ENCODE measurements at regions of chr22 and their contacts with region 1.

Region 1: GRCh38 chr22:22959147-22959827 is 71.7 kb downstream of the IGLL5 start:
- DNase-seq: peak; percentile 88
- H3K4me3 Mint-ChIP-seq: no peak overlapping the region
- H3K27ac Mint-ChIP-seq: no peak overlapping the region
- H3K4me1 Mint-ChIP-seq: peaks cover 2% of the 10 kb centered on the region
- H3K27me3 Mint-ChIP-seq: peaks cover 15% of the 10 kb centered on the region

Region 2: GRCh38 chr22:22810018-22810427 is 149.3 kb before region 1 on chr22:
- CTCF ChIA-PET with region 1: interaction called, 77 read pairs
- intact Hi-C with region 1: loop called (anchors 1 kb)
- DNase-seq: peak; percentile 80
- H3K4me3 Mint-ChIP-seq: no peak overlapping the region
- H3K27ac Mint-ChIP-seq: no peak overlapping the region
- H3K4me1 Mint-ChIP-seq: peaks cover 12% of the 10 kb centered on the region
- H3K27me3 Mint-ChIP-seq: no peaks in the 10 kb centered on the region

Region 3: GRCh38 chr22:22942511-22943329 is 16.6 kb before region 1 on chr22:
- CTCF ChIA-PET with region 1: interaction called, 45 read pairs
- intact Hi-C with region 1: no loop called
- DNase-seq: peak; percentile 89
- H3K4me3 Mint-ChIP-seq: no peak overlapping the region
- H3K27ac Mint-ChIP-seq: no peak overlapping the region
- H3K4me1 Mint-ChIP-seq: peaks cover 1% of the 10 kb centered on the region
- H3K27me3 Mint-ChIP-seq: peaks cover 2% of the 10 kb centered on the region

Region 4: DNA sequence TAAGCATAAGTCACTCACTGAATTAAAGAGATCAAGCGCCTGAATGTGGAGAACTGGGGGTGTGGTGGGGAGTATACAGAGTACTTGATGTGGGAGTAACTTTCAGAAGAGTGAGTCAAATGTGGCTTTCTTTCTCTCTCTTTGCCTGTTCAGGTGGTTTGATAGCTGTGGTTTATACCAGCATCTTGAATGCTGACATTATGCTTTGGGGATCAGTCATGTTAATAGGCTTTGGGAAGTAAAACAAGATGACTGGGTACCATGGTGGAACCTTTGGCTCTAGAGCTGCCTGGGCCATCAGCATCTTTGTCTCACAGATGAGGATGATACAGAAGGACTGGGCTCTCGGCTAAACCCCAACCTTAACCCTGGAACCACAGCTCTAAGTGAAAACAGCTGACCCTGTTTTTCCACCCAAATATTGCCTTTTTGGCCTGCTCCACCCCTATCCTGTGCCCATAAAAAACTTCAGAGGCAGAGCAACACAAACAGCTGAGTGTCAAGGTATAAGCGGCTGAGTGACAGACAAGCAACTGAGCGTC is 52.9 kb after region 1 on chr22:
- CTCF ChIA-PET with region 1: interaction called, 10 read pairs
- intact Hi-C with region 1: no loop called
- DNase-seq: peak; percentile 69
- H3K4me3 Mint-ChIP-seq: no peak overlapping the region
- H3K27ac Mint-ChIP-seq: peak overlapping the region; percentile 48
- H3K4me1 Mint-ChIP-seq: peaks cover 26% of the 10 kb centered on the region
- H3K27me3 Mint-ChIP-seq: peaks cover 43% of the 10 kb centered on the region

Region 5: GRCh38 chr22:23163665-23164064 is 204.4 kb after region 1 on chr22:
- CTCF ChIA-PET with region 1: interaction called, 11 read pairs
- intact Hi-C with region 1: no loop called
- DNase-seq: no peak
- H3K4me3 Mint-ChIP-seq: no peak overlapping the region
- H3K27ac Mint-ChIP-seq: no peak overlapping the region
- H3K4me1 Mint-ChIP-seq: no peaks in the 10 kb centered on the region
- H3K27me3 Mint-ChIP-seq: no peaks in the 10 kb centered on the region

Measured in activated naive CD4-positive, alpha-beta T cell treated with anti-CD3 and anti-CD28 coated beads for 36 hours (primary cell).